ENCODE measurements at regions of chr3 and their contacts with region 1.

Region 1: DNA sequence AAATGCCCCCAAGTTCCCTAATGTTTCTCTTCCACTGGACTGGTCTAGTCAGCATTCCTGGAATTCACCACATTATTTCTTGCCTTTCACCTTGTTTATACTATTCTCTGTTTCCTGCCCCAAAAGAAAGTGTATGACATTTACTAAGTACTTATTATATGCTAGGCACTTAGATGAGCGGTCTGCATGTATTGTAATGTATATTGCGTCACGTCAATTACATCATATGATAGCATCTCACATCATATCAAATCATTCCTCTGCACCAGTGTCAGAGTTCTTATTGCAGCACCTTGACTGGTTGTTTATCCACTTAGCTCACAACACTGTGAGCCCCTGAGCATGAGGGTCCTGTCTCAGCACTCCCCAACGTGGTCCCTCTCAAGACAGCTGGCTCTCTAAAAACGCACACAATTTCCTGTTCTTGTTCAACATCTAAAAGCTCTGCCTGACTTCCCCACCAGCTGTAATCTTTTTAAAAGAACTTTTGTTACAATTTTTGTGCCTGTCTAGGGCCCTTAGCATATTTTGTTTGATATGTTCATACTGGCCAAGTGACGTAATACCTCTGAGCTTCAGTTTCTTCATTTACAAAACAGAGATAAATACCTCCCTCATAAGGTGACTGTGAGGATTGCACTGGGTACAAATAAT is 58.8 kb downstream of the ARHGAP31 start:
- DNase-seq: peak; percentile 52
- H3K4me3 ChIP-seq: no peak overlapping the region
- CTCF ChIP-seq: peak; percentile 26

Region 2: DNA sequence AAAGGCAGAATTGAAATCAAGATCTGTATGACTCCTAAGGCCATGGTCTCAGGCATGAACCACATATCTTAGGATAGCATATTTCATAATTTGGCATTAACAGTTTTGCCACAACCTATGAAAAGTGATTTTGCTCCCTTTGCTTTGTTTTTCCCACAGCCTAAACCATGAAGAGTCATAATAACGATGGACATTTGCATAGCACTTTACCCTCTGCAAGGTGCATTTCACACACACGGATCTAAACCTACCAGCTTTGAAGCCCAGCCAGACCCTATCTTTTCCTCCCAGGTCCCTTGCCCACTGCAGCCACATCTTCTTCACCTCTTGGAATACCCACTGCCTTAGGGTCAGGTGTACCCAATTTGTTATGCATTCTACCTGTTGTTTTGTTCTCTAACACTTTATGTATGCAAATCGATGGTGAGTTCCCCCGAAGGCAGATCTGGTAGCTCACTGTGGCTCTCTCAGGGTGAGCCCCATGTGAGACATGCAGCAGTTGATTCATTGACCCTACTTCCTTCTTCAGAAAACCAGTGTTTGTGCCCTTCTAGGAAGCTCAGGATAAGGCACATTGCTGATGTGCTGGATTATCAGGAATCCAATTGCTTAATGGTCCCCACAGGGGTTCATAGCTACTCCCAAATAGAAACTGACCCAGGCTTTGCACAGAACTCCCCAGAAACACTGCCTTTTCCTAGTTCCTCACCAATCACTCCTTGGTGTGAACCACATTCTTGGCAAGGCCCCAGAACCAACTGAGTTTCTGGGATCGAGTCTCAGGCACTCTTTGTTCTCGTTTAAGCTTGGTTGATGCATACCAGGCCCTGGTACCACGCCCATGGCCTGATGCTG is 50.1 kb before region 1 on chr3:
- CTCF ChIA-PET with region 1: interaction called, 13 read pairs
- POLR2A ChIA-PET with region 1: no interaction called
- DNase-seq: no peak
- H3K4me3 ChIP-seq: no peak overlapping the region
- CTCF ChIP-seq: no peak

Region 3: DNA sequence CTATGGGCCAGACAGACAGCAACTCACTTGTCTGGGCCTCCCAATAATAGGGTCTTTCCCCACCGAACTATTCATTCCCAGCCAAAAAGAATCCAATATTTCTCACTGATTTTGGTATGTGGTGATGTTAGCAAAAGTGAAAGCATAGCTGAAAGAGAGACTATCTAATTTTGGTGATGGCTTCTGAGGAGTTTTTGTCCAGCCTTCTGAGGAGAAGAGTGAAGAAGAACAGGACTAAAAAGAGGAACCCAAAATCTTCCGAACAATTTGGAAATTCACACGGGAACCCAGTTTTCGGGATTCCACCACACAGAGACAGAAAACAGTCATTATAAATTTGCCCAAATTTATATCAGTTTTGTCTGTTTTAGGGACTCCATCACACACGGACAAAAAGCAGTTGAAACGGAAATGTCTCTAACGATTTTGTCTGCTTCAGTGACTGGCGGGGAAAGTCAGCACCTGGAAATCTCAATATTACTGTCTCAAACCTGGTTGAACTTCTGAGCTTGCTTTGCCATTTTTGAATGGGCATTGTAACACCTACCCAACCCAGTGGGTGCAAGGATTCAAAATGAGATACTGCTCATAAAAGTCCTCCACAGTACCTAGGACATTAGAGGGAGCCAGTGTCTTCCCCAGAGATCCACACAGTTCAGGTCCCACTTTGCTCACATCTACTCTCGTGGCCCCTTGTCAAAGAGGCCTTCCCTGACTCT is 197.4 kb after region 1 on chr3:
- CTCF ChIA-PET with region 1: no interaction called
- POLR2A ChIA-PET with region 1: no interaction called
- DNase-seq: no peak
- H3K4me3 ChIP-seq: no peak overlapping the region
- CTCF ChIP-seq: no peak

Measured in AG04449 (cell line).